Sciatic nerve (tissue), 2 donors: ENCODE measurements at regions of chr5 and their contacts with region 1.

Region 1: DNA sequence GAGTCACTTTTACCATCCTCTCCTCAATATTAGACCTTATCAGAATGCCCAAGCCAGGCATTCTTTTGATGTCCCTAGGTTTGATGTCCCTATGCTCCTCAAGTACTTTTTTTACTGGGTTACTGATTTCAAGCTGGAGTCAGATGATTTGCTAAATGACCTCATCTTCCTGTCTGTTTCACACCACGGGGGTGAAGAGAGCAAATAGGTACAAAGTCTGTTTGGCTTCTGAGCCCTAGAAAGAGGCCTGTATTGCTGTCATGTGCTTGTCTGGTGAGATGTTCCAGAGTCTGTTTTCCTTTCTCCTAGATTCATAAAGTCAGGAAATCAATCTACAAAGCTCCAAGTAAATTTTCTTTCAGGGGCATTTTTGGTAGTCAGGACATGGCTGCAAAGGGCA is 12.7 kb upstream of the DAB2 start:
- DNase-seq: no peak
- ATAC-seq: no peak

Region 2: GRCh38 chr5:39415201-39415600 is 22.3 kb before region 1 on chr5:
- intact Hi-C with region 1: loop called (anchors 2 kb)
- DNase-seq: no peak
- ATAC-seq: peak; percentile 39